PC-9 (cell line): ENCODE measurements at regions of chr15 and their contacts with region 1.

Region 1: GRCh38 chr15:99275525-99276128 is 24.3 kb downstream of the LRRC28 start:
- DNase-seq: no peak
- H3K4me3 ChIP-seq: no peak overlapping the region
- H3K27ac ChIP-seq: no peak overlapping the region
- H3K4me1 ChIP-seq: no peaks in the 10 kb centered on the region
- H3K27me3 ChIP-seq: no peaks in the 10 kb centered on the region
- CTCF ChIP-seq: no peak

Region 2: GRCh38 chr15:99213187-99213811 is 62.3 kb before region 1 on chr15:
- CTCF ChIA-PET with region 1: no interaction called
- POLR2A ChIA-PET with region 1: no interaction called
- intact Hi-C with region 1: no loop called
- DNase-seq: peak in 1 of 2 experiments; percentile 69
- H3K4me3 ChIP-seq: no peak overlapping the region
- H3K27ac ChIP-seq: no peak overlapping the region
- H3K4me1 ChIP-seq: no peaks in the 10 kb centered on the region
- H3K27me3 ChIP-seq: no peaks in the 10 kb centered on the region
- CTCF ChIP-seq: peak; percentile 92

Region 3: DNA sequence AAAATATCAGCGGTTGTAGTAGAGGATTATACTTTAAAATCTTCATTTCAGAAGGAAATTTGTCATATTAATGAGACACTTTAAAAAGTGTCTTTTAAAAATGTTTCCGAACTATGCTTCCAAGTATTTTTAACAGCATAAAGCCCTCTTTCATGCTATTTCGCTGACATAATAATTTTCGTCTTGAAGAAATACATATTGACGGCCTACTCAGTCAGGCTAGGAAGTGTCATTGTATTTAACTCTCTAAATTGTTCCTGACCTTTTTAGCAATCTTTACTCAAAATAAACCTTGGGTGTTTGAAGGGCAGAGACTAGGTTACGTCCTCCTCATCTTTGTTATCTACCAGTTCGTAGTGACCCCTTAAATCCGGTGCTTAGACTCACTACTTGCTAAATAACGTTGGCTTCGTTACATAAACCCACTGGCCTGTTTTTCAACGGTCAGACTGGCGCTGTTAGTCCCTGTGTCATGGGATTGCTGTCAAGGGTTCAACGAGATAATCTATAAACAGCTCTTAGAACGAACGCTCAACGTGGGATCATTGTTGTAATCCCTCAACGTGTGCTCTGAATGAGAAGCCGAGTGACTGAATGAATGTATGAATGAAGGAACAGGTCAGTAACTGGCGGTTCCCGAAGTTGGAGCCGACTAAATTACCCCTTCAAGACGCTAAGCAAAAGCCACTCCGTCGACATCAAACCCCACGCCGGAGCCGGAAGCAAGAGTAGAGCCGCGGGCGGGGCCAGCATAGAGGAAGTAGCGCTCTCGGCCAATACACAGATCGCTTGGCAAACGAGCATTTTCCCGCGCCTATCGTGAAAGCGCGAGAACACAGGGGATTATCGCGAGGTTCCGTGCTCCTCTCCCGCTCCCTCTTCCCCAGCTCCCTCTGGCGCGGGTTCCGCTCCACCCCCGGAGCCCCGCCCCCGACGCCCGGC is 24.9 kb before region 1 on chr15:
- CTCF ChIA-PET with region 1: no interaction called
- POLR2A ChIA-PET with region 1: interaction called, 12 read pairs
- intact Hi-C with region 1: no loop called
- DNase-seq: peak; percentile 93 to 98
- H3K4me3 ChIP-seq: peak overlapping the region; percentile 98
- H3K27ac ChIP-seq: peak overlapping the region; percentile 74
- H3K4me1 ChIP-seq: peaks cover 20% of the 10 kb centered on the region
- H3K27me3 ChIP-seq: no peaks in the 10 kb centered on the region
- CTCF ChIP-seq: no peak

Region 4: GRCh38 chr15:99704444-99704838 is 428.8 kb after region 1 on chr15:
- CTCF ChIA-PET with region 1: interaction called, 21 read pairs
- POLR2A ChIA-PET with region 1: no interaction called
- intact Hi-C with region 1: loop called (anchors 1 kb)
- DNase-seq: peak; percentile 35 to 71
- H3K4me3 ChIP-seq: no peak overlapping the region
- H3K27ac ChIP-seq: peak overlapping the region; percentile 66; the same call in 1 of the 2 replicates
- H3K4me1 ChIP-seq: peaks cover 11% of the 10 kb centered on the region
- H3K27me3 ChIP-seq: no peaks in the 10 kb centered on the region
- CTCF ChIP-seq: peak; percentile 79

Region 5: DNA sequence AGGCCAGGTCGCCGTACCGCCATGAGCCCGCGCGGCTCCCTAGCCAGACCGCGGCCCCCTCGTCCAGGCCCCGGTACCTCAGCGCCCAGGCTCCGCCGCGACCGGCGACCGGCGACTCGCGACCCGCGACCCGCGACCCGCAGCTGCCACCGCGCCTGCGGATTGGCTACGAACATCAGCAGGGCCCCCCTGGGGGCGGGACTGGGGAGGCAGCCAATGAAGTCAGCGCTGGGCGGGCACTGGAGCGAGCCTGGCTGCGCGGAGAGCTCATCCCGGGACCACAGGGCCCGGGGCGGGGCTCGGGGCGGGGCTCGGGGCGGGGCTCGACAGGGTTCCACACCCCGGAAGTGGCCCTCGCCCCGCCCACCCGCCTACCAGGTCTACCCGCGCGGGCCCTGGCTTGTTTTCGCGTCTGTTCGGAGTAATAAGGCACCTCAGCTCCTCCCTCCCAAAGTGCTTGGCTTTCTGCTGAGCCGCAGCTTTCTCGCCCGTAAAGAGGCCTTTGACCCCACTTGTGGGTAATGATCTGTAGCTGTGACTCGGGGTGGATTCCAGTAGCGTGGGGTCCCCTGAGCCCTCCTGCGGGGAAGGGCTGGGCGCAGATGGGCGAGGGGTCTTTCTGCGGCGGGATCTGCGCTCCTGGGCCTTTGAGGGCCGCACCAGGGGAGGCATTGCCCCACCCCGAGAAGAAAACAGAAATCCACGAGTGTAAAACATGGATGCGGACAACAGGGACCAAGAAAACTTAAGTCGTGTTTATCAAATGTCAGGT is 457.8 kb after region 1 on chr15 and contains the start of gene LYSMD4:
- CTCF ChIA-PET with region 1: interaction called, 16 read pairs
- POLR2A ChIA-PET with region 1: interaction called, 3 read pairs
- intact Hi-C with region 1: no loop called
- DNase-seq: peak; percentile 80 to 95
- H3K4me3 ChIP-seq: peak within 1 kb of the TSS; percentile 78
- H3K27ac ChIP-seq: peak within 1 kb of the TSS; percentile 23; the same call in 1 of the 2 replicates
- H3K4me1 ChIP-seq: peaks cover 7% of the 10 kb centered on the region; the same call in 1 of the 2 replicates
- H3K27me3 ChIP-seq: no peaks in the 10 kb centered on the region
- CTCF ChIP-seq: no peak
- total RNA-seq, gene LYSMD4: 4.7 and 5.7 TPM in 2 replicates

Region 6: GRCh38 chr15:99755692-99756409 is 480.2 kb after region 1 on chr15:
- CTCF ChIA-PET with region 1: interaction called, 8 read pairs
- POLR2A ChIA-PET with region 1: no interaction called
- intact Hi-C with region 1: loop called (anchors 1 kb)
- DNase-seq: peak; percentile 24 to 38
- H3K4me3 ChIP-seq: no peak overlapping the region
- H3K27ac ChIP-seq: no peak overlapping the region
- H3K4me1 ChIP-seq: no peaks in the 10 kb centered on the region
- H3K27me3 ChIP-seq: no peaks in the 10 kb centered on the region
- CTCF ChIP-seq: peak; percentile 78

Region 7: DNA sequence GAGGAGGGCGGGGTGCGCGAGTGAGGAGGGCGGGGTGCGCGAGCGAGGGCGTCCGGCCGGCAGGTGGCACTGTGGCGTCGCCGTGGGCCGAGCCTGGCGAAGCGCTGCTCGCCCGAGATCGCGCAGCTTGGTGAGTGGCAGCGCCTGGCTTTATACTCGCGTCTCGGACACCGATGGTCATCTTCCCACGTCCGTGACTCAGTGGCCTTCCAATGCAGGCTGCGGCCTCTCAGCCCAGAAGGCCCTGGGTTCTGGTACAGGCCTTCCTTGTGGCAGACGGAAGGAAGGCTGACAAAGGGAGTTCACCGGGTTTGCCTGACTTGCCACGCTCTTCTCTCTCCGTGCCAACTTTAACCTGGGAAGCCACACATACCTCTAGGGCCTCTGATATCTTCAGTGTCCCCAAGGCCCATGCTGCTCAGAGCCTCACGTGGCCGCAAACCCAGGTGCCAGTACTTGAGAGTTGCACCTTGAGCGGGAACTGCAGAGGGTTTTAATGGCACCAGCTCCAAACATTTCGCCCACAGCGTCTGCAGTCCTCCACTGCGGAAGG is 652.9 kb after region 1 on chr15:
- CTCF ChIA-PET with region 1: interaction called, 3 read pairs
- POLR2A ChIA-PET with region 1: no interaction called
- intact Hi-C with region 1: loop called (anchors 5 kb)
- DNase-seq: peak; percentile 47 to 83
- H3K4me3 ChIP-seq: peak overlapping the region; percentile 69
- H3K27ac ChIP-seq: peak overlapping the region; percentile 40; the same call in 1 of the 2 replicates
- H3K4me1 ChIP-seq: peaks cover 8% of the 10 kb centered on the region
- H3K27me3 ChIP-seq: peaks cover 13% of the 10 kb centered on the region; the same call in 1 of the 2 replicates
- CTCF ChIP-seq: peak; percentile 68

Region 8: GRCh38 chr15:100602064-100602822 is 1326.6 kb after region 1 on chr15 and contains the starts of genes ASB7 and LINS1:
- CTCF ChIA-PET with region 1: no interaction called
- POLR2A ChIA-PET with region 1: no interaction called
- intact Hi-C with region 1: loop called (anchors 10 kb)
- DNase-seq: peak; percentile 99
- H3K4me3 ChIP-seq: peak within 1 kb of the TSS; percentile 86
- H3K27ac ChIP-seq: peak within 1 kb of the TSS; percentile 26
- H3K4me1 ChIP-seq: peaks cover 20% of the 10 kb centered on the region
- H3K27me3 ChIP-seq: no peaks in the 10 kb centered on the region
- CTCF ChIP-seq: no peak
- total RNA-seq, gene ASB7: 17.9 and 19.0 TPM in 2 replicates
- total RNA-seq, gene LINS1: 7.0 and 10.9 TPM in 2 replicates